ENCODE measurements at regions of chr10 and their contacts with region 1.

Region 1: GRCh38 chr10:100286051-100287033 is at the start of gene BLOC1S2:
- DNase-seq: peak; percentile 94
- H3K4me3 ChIP-seq: peak within 1 kb of the TSS; percentile 60 to 94 (median 84)
- H3K27ac ChIP-seq: peak within 1 kb of the TSS; percentile 86 to 99 (median 96)
- H3K4me1 ChIP-seq: peaks cover 0 to 38% (median 27%) of the 10 kb centered on the region in 4 donors
- H3K27me3 ChIP-seq: no peaks in the 10 kb centered on the region
- CTCF ChIP-seq: no peak
- EP300 ChIP-seq: no peak
- POLR2A ChIP-seq: peak; percentile 76 to 82
- total RNA-seq, gene BLOC1S2: 12.1 to 23.9 (median 18.3) TPM

Region 2: GRCh38 chr10:100229819-100230422 is 56.4 kb before region 1 on chr10:
- intact Hi-C with region 1: loop called (anchors 5 kb)
- DNase-seq: no peak
- H3K4me3 ChIP-seq: peak overlapping the region; percentile 89 to 97 (median 94)
- H3K27ac ChIP-seq: peak overlapping the region; percentile 80 to 88 (median 83)
- H3K4me1 ChIP-seq: peaks cover 0 to 16% (median 13%) of the 10 kb centered on the region in 4 donors
- H3K27me3 ChIP-seq: no peaks in the 10 kb centered on the region
- CTCF ChIP-seq: no peak
- EP300 ChIP-seq: no peak
- POLR2A ChIP-seq: no peak

Region 3: GRCh38 chr10:100267237-100268104 is 18.9 kb before region 1 on chr10 and contains the start of gene CWF19L1:
- intact Hi-C with region 1: loop called (anchors 2 kb)
- DNase-seq: peak; percentile 94
- H3K4me3 ChIP-seq: peak within 1 kb of the TSS; percentile 51 to 98 (median 83)
- H3K27ac ChIP-seq: peak within 1 kb of the TSS; percentile 76 to 90 (median 84)
- H3K4me1 ChIP-seq: peaks cover 0 to 20% (median 19%) of the 10 kb centered on the region in 4 donors
- H3K27me3 ChIP-seq: no peaks in the 10 kb centered on the region
- CTCF ChIP-seq: no peak
- EP300 ChIP-seq: peak in 1 of 4 donors; percentile 33
- POLR2A ChIP-seq: peak in 1 of 2 donors; percentile 56
- total RNA-seq, gene CWF19L1: 13.8 to 17.1 (median 16.1) TPM

Region 4: DNA sequence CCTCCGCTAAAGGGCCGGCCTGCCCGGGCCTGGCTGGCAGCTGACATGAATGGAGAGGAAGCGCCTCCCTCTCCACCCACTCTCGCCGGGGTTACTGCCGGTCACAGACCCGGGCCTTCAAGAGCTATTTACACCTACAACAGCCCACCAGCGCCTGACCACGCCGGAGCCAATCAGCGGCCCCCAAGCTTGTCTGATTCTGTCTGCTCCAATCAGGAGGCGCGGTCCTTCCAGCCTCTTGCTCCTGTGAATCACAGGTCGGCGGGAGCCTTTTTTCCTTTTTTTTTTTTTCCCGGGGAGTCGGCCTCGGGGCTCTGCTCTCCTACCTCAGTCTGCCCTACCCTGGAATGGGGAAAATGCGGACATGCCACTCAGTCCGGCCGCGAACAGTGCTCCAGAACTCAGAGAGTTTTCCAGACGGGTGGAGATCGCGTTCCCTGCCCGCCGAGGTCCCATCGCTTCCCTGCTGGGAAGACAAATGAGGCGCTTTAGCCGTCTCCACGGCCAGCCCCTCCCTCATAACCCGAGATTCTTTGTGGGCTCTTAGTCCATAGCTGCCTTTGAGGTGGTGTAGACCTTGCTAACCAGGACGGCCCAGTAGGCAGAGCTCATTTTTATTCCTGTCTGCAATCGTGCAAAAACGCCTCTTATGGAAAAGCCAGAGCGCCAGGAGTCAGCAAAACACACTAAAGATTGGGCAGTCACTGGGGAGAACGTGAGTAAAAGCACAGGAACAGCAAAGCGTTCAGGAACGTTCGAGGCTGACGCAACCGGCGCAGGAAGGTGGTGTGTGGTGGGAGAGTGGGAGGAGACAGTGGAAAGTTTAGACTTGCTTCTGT is 87.2 kb after region 1 on chr10:
- intact Hi-C with region 1: loop called (anchors 5 kb)
- DNase-seq: peak; percentile 99
- H3K4me3 ChIP-seq: peak overlapping the region; percentile 41 to 80 (median 60)
- H3K27ac ChIP-seq: peak overlapping the region; percentile 90 to 99 (median 96)
- H3K4me1 ChIP-seq: peaks cover 0 to 31% (median 28%) of the 10 kb centered on the region in 4 donors
- H3K27me3 ChIP-seq: no peaks in the 10 kb centered on the region
- CTCF ChIP-seq: no peak
- EP300 ChIP-seq: peak in 1 of 4 donors; percentile 19
- POLR2A ChIP-seq: peak in 1 of 2 donors; percentile 36

Measured in sigmoid colon (tissue), 7 donors.